ENCODE measurements at regions of chr5 and their contacts with region 1.

Region 1: DNA sequence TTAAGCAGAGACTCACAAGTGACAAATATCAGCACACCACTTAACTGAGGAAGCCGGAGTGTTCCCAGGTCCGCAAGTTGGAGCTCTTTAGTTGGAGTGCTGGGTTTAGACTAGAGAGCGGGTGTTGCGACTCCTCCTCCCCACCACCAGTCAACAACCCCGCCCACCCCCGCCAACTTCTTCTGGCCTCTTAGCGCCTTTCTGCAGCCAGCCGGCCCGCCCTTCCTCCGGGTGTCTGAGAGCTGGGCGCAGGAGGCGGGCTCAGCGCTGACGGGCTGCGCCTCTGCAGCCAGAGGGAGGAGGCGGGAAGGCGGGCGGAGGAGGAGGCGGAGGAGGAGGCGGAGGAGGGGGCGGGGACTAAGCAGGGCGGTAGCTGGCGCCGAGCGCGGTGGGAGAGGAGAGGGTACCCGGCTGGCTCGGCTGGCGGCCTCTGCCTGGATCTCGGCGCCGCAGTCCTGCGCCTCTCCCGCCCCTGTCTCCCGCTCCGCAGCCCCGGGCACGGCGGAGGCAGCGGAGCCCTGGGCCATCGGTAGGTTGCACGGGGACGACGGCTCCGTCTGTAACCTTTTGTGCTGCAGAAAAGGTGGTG is at the start of gene MACIR:
- DNase-seq: peak; percentile 99
- H3K4me3 Mint-ChIP-seq: peak within 1 kb of the TSS; percentile 94
- H3K27ac Mint-ChIP-seq: peak within 1 kb of the TSS; percentile 79
- H3K4me1 Mint-ChIP-seq: peaks cover 30% of the 10 kb centered on the region
- H3K27me3 Mint-ChIP-seq: no peaks in the 10 kb centered on the region
- CTCF ChIP-seq: no peak
- total RNA-seq, gene MACIR: 24.5 and 25.2 TPM in 2 replicates

Region 2: GRCh38 chr5:103271570-103272289 is 13.3 kb after region 1 on chr5:
- CTCF ChIA-PET with region 1: interaction called, 21 read pairs
- intact Hi-C with region 1: loop called (anchors 2 kb)
- DNase-seq: no peak
- H3K4me3 Mint-ChIP-seq: peak overlapping the region; percentile 15
- H3K27ac Mint-ChIP-seq: no peak overlapping the region
- H3K4me1 Mint-ChIP-seq: peaks cover 36% of the 10 kb centered on the region
- H3K27me3 Mint-ChIP-seq: no peaks in the 10 kb centered on the region
- CTCF ChIP-seq: no peak

Region 3: GRCh38 chr5:103347716-103348430 is 89.4 kb after region 1 on chr5:
- CTCF ChIA-PET with region 1: interaction called, 7 read pairs
- intact Hi-C with region 1: loop called (anchors 5 kb)
- DNase-seq: no peak
- H3K4me3 Mint-ChIP-seq: no peak overlapping the region
- H3K27ac Mint-ChIP-seq: no peak overlapping the region
- H3K4me1 Mint-ChIP-seq: no peaks in the 10 kb centered on the region
- H3K27me3 Mint-ChIP-seq: no peaks in the 10 kb centered on the region
- CTCF ChIP-seq: no peak